ENCODE measurements at regions of chr19 and their contacts with region 1.

Region 1: DNA sequence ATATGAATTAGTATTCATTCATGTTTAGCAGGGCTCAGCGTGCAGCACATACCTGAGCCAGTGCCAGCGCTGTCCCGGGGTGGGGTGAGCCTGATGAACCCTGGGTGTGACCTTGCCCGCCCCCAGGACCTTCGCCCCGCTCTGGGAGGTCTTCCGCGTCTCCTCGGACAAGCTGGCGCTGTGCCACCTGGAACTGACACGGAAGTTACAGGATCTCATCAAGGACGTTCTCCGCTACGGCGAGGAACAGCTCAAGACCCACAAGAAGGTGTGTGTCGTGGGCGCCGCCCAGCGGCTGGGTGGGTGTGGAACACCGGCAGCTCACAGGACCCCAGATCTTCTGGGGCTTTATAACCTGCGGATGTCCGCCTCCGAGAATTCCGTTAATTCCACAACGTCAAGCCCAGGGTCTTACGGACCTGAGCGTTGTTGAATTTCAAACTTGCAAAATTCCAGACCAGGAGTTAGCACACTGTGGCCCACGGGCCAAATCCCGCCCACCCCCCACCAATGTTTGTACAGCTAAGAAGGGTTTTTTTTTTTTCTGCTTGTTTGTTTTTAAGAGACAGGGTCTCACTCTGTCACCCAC is 15.4 kb downstream of the FCHO1 start:
- DNase-seq: peak; percentile 32
- H3K4me3 ChIP-seq: peak overlapping the region; percentile 41
- H3K27ac ChIP-seq: no peak overlapping the region
- H3K27me3 ChIP-seq: no peaks in the 10 kb centered on the region
- CTCF ChIP-seq: peak; percentile 94

Region 2: DNA sequence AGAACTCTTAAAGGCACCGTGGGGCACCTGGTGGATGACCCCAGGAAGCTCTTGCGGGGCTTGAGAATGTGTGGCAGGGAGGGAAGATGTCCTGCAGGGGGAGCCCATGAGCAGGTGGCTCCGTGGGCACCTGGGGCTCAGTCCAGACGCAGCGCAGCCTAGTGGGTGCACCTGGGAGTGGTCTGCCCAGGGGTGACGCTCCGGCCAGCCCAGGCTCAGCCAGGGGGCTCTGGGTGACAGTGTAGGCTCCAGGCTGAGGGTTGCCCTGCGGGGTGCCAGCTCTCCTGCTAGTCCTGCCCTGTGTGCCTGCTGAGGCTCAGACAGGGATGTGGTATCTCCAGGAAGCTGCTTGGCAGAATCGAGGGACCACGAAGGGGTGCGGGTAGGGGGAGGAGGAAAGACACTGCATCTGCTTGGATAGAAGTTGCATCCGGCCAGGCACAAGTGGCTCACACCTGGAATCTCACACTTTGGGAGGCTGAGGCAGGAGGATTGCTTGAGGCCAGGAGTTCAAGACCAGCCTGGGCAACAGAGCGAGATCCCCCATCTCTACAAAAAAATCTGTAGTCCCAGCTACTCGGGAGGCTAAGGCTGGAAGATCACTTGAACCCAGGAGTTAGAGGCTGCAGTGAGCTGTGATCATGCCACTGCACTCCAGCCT is 270.2 kb before region 1 on chr19:
- CTCF ChIA-PET with region 1: interaction called, 11 read pairs
- POLR2A ChIA-PET with region 1: no interaction called
- DNase-seq: no peak
- H3K4me3 ChIP-seq: no peak overlapping the region
- H3K27ac ChIP-seq: no peak overlapping the region
- H3K27me3 ChIP-seq: no peaks in the 10 kb centered on the region
- CTCF ChIP-seq: peak; percentile 88

Region 3: DNA sequence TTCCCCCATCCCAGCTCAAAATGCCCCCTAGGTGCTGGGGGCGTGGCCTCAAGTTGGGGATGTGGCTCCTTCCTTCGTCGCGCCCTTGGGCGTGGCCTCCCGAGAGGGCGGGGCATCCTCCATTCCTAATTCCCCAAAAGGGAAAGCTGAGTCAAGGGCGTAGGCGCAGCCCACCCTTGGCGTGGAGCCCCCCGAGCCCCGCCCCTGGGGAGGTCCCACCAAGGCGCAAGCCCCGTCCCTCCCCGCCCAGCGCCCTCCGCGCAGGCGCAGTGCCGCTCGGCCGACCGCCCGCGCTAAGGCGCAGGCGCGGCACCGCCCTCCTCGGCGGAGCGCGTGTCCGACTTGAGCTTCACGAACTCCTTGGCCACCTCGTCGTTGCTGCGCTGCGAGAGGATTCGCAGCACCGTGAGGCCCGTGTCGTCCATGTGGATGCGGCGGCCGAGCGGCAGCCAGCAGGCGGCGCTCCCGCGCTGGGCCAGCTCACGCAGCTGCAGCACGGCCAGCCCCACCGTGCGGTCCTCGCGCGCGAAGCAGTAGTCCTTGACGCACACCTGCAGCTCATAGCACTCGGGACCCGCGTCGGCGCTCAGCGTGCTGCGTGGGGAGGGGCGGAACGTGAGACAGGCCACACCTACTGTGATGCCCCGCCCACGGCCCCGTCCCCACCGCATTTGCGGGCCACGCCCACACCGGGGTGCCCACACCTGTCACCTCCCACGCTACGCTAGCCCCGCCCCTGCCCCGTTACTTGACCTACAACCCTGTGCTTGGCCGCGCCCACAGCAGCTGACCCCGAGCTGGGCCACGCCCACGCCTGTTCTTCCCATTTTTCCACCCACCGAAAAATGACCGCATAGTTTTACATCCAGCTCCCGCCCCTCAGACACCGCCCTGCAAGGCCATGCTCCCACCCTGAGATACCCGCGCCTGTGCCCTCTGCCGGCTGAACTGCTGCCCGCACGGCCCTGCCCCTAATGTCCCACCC is 160.6 kb before region 1 on chr19:
- CTCF ChIA-PET with region 1: interaction called, 11 read pairs
- POLR2A ChIA-PET with region 1: no interaction called
- DNase-seq: no peak
- H3K4me3 ChIP-seq: peak overlapping the region; percentile 43; the same call in 1 of the 2 replicates
- H3K27ac ChIP-seq: no peak overlapping the region
- H3K27me3 ChIP-seq: peaks cover 20% of the 10 kb centered on the region
- CTCF ChIP-seq: peak; percentile 37

Region 4: GRCh38 chr19:17654993-17655392 is 111.6 kb before region 1 on chr19:
- CTCF ChIA-PET with region 1: no interaction called
- POLR2A ChIA-PET with region 1: no interaction called
- DNase-seq: no peak
- H3K4me3 ChIP-seq: no peak overlapping the region
- H3K27ac ChIP-seq: no peak overlapping the region
- H3K27me3 ChIP-seq: peaks cover 3% of the 10 kb centered on the region
- CTCF ChIP-seq: no peak

Region 5: DNA sequence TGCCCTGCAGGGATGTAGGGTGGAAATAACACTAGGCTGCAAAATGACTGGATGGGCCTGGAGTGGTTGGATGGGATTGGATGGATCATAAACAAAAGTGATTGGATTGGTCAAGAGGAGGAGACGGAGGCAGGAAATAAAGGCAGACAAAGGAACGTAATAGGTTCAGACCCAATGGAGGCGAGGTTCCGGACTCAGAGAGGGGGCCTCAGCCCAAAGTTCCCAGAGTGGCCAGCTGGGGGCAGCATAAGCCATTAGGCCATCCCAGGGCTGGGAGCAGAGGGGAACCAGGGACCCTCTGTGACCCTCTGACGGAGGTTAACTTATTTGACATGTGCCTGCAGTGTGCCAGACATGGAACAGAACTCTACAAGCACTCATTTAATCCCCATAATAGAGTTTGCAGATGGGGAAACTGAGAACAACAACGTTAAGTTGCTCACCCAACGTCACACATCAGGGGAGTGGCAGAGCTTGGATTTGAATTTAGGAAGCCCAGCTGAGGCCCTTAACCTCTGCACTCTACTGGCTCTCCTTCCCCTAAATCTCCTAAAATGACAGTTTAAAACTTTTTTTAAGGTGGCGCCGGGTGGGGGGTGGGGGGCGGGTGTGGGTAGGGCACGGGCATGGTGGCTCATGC is 62.7 kb before region 1 on chr19:
- CTCF ChIA-PET with region 1: interaction called, 33 read pairs
- POLR2A ChIA-PET with region 1: no interaction called
- DNase-seq: no peak
- H3K4me3 ChIP-seq: no peak overlapping the region
- H3K27ac ChIP-seq: no peak overlapping the region
- H3K27me3 ChIP-seq: no peaks in the 10 kb centered on the region
- CTCF ChIP-seq: peak; percentile 72

Region 6: DNA sequence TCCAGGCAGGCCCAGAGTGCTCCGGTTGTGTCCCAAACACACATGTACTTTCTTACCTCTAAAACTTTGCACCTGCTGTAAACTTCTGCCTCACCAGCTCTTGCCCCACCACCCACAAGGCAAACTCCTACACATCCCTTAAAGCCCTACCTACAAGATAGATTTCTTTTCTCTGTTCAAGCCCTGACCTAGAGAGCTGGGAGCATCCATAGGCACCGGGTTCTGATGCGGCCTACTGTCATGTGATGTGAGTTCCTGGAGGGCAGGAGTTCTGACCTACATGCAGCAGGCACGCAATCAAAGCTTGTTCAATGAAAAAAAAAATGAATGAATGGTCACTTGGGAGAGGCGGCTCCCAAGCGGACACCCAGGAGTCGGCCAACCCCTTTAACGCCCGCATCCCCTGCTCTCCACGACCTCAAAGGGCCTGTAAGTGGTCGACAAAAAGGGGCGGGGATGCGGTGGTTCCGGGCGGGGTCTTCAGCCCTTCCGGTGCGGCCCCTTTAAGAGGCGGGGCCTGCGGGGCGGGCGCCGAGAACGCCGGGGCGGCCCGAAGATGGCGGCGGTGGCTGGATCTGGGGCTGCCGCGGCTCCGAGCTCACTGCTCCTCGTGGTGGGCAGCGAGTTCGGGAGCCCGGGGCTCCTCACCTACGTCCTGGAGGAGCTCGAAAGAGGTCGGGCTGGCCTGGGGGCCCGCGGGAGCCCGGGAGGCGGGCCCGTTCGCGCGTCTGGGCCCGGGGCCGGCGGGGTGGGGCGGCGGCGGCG is 47.5 kb before region 1 on chr19 and contains the start of gene MAP1S:
- CTCF ChIA-PET with region 1: interaction called, 12 read pairs
- POLR2A ChIA-PET with region 1: no interaction called
- DNase-seq: no peak
- H3K4me3 ChIP-seq: peak within 1 kb of the TSS; percentile 87
- H3K27ac ChIP-seq: no peak within 1 kb of the TSS
- H3K27me3 ChIP-seq: no peaks in the 10 kb centered on the region
- CTCF ChIP-seq: no peak
- polyA plus RNA-seq, gene MAP1S: 8.2 and 14.3 TPM in 2 replicates